Activated CD8-positive, alpha-beta T cell treated with anti-CD3 and anti-CD28 coated beads, Interleukin-2, amount 10 ng/mL, durations not matched to agents 7 days and 5 days (primary cell): ENCODE measurements at regions of chr16 and their contacts with region 1.

Region 1: DNA sequence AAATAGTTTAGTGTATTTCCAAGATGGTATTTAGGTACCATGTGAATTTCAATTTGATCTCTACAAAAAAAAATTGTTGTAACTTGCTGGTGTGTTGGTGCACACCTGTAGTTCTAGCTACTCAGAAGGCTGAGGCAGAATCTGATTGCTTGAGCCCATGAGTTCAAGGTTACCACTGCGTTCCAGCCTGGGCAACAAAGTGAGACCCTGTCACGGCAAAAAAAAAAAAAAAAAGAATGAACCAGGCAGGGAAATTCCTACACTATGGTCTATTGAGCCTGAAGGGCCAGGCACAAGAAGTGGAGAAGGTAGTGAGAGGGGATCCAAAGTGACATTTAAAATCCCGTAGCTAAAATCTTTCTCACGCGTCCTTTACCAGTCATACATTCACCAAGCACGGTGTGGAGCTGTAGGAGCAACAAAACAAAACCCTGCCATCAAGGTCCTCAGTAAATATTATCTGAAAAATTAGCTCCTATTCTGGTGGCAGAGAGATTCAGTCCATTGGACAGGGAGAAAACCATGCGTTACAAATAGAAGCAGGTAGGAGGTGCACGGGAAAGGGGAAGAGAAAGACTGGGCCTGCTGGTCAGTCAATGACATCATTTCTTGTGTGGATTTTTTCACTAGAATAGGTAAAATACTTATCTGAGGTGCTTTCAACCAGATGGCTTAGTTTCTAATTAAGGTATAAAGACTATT is 27.3 kb downstream of the TXNDC11 start:
- DNase-seq: no peak
- ATAC-seq: no peak
- H3K4me3 Mint-ChIP-seq: no peak overlapping the region
- H3K27ac Mint-ChIP-seq: no peak overlapping the region
- H3K4me1 Mint-ChIP-seq: peaks cover 11% of the 10 kb centered on the region
- H3K27me3 Mint-ChIP-seq: no peaks in the 10 kb centered on the region

Region 2: GRCh38 chr16:11396241-11397048 is 319.0 kb before region 1 on chr16:
- CTCF ChIA-PET with region 1: interaction called, 22 read pairs
- POLR2A ChIA-PET with region 1: no interaction called
- DNase-seq: peak; percentile 73
- ATAC-seq: peak; percentile 74
- H3K4me3 Mint-ChIP-seq: no peak overlapping the region
- H3K27ac Mint-ChIP-seq: peak overlapping the region; percentile 14
- H3K4me1 Mint-ChIP-seq: no peaks in the 10 kb centered on the region
- H3K27me3 Mint-ChIP-seq: no peaks in the 10 kb centered on the region

Region 3: GRCh38 chr16:11407047-11407982 is 308.1 kb before region 1 on chr16:
- CTCF ChIA-PET with region 1: interaction called, 16 read pairs
- POLR2A ChIA-PET with region 1: no interaction called
- DNase-seq: peak; percentile 77
- ATAC-seq: peak; percentile 62
- H3K4me3 Mint-ChIP-seq: no peak overlapping the region
- H3K27ac Mint-ChIP-seq: no peak overlapping the region
- H3K4me1 Mint-ChIP-seq: peaks cover 2% of the 10 kb centered on the region
- H3K27me3 Mint-ChIP-seq: no peaks in the 10 kb centered on the region

Region 4: GRCh38 chr16:11530171-11530940 is 185.0 kb before region 1 on chr16:
- CTCF ChIA-PET with region 1: interaction called, 47 read pairs
- POLR2A ChIA-PET with region 1: no interaction called
- DNase-seq: no peak
- ATAC-seq: no peak
- H3K4me3 Mint-ChIP-seq: no peak overlapping the region
- H3K27ac Mint-ChIP-seq: no peak overlapping the region
- H3K4me1 Mint-ChIP-seq: peaks cover 1% of the 10 kb centered on the region
- H3K27me3 Mint-ChIP-seq: peaks cover 2% of the 10 kb centered on the region

Region 5: GRCh38 chr16:11639925-11640899 is 75.2 kb before region 1 on chr16:
- CTCF ChIA-PET with region 1: interaction called, 11 read pairs
- POLR2A ChIA-PET with region 1: no interaction called
- DNase-seq: no peak
- ATAC-seq: no peak
- H3K4me3 Mint-ChIP-seq: no peak overlapping the region
- H3K27ac Mint-ChIP-seq: no peak overlapping the region
- H3K4me1 Mint-ChIP-seq: peaks cover 8% of the 10 kb centered on the region
- H3K27me3 Mint-ChIP-seq: peaks cover 13% of the 10 kb centered on the region

Region 6: DNA sequence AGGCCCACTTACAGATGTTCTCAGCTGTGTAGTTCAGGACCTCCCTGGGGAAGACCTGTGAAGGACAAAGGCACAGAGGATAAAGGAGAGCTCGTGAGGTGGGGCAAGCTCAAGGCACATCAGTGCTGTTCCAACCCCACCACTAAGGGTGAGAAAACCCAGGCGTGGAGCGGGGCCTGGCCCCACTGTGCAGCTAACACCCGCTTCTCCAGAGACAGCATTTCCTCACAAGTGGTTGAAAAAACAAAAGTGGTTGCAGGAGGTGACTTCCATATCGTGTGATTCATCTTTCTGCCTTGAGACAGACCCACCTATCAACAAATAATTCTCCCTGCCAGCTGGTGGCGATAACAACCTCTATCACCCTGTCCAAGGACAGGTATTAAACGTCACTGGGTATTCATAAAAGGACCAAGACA is 17.1 kb before region 1 on chr16:
- CTCF ChIA-PET with region 1: interaction called, 20 read pairs
- POLR2A ChIA-PET with region 1: interaction called, 5 read pairs
- DNase-seq: peak; percentile 44
- ATAC-seq: peak; percentile 57
- H3K4me3 Mint-ChIP-seq: no peak overlapping the region
- H3K27ac Mint-ChIP-seq: peak overlapping the region; percentile 27
- H3K4me1 Mint-ChIP-seq: peaks cover 43% of the 10 kb centered on the region
- H3K27me3 Mint-ChIP-seq: no peaks in the 10 kb centered on the region

Region 7: DNA sequence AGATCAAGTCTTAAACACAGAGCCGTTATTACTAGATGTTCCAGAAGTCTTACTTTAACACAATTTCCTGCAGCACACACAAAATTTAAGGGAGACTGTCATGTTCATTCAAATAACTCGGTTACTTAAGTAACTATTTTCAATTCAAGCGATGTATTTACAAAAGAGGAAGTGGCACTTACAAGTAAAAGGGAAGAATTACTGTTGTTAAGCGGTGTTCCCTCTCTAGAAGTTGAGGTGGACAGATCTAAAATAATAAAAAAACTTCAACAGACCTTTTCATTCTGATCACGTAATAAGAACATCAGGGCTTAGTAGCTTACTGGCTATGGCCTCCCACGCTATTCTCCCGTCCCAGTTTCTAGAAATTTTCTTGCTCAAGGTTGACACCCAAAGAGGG is 53.5 kb after region 1 on chr16:
- CTCF ChIA-PET with region 1: no interaction called
- POLR2A ChIA-PET with region 1: no interaction called
- DNase-seq: no peak
- ATAC-seq: no peak
- H3K4me3 Mint-ChIP-seq: no peak overlapping the region
- H3K27ac Mint-ChIP-seq: peak overlapping the region; percentile 22
- H3K4me1 Mint-ChIP-seq: peaks cover 6% of the 10 kb centered on the region
- H3K27me3 Mint-ChIP-seq: no peaks in the 10 kb centered on the region